Breast epithelium (tissue), 4 donors: ENCODE measurements at regions of chr7 and their contacts with region 1.

Region 1: DNA sequence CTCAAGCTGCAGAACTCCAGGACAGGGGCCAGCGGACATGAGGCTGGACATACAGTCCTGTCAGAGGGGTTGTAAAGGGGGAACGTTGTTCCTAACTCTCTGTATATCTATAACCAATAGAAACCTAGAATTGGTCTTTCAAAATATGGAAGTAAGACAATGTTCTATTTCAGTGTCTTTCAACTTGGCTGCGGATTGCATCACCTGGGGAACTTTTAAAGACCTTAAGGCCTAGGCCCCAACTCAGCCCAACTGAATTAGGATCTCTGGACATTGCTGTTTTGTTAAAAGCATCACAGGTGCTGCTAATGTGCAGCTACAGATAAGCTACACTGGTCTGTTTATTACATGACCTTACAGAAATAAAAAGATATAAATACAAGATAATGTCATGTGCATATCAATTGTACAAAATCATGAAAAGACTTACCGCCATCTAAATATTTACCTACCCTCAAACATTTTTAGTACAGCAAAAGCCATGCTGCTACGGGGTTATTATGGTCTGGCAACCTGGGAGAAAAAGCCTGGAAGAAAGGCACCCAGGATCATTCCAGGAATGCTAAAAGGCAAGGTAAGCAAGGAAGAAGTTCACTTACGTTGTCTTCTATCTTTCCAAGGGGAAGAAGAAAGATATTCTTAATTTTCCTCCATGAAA is 169.1 kb downstream of the RAPGEF5 start:
- DNase-seq: no peak
- H3K4me3 ChIP-seq: no peak overlapping the region
- H3K27ac ChIP-seq: no peak overlapping the region
- H3K4me1 ChIP-seq: no peaks in the 10 kb centered on the region
- H3K27me3 ChIP-seq: no peaks in the 10 kb centered on the region
- CTCF ChIP-seq: no peak
- POLR2A ChIP-seq: no peak

Region 2: DNA sequence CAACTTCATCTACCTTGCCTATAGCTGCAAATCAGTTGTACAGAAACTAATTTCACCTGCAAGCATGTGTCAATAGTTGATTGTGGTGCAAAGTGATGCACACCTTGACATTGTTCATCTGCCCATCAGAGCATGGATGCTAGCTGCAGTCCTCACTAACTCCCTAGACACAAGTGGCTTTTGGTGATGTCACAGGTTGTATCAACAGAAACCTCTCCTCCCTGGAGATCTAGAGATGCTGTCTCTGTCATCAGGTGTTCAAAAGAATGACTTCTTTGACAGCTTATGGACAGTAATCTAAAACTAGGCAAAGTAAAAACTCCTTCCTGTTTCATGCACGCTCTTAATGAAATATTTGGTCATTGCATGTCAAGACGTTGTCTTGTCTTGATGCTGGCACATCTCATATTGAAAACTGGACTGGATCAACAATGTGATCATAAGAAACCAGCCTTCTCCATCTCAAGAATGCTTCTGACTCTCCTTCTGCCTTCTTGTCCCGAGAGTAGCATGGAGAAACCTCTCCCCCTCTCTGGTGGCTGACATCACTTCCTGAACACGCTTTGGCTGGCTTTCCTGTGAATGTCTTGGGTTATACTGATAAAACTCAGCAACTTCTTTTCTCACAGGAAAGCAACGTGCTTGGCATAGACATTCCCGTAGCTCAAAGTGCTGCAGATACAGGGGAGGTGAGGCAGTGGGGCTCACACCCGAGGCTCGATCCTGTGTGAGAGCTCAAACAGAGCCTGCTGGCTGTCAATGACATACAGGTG is 65.9 kb before region 1 on chr7:
- intact Hi-C with region 1: no loop called
- DNase-seq: no peak
- H3K4me3 ChIP-seq: no peak overlapping the region
- H3K27ac ChIP-seq: no peak overlapping the region
- H3K4me1 ChIP-seq: no peaks in the 10 kb centered on the region
- H3K27me3 ChIP-seq: no peaks in the 10 kb centered on the region
- CTCF ChIP-seq: no peak
- POLR2A ChIP-seq: no peak

Region 3: DNA sequence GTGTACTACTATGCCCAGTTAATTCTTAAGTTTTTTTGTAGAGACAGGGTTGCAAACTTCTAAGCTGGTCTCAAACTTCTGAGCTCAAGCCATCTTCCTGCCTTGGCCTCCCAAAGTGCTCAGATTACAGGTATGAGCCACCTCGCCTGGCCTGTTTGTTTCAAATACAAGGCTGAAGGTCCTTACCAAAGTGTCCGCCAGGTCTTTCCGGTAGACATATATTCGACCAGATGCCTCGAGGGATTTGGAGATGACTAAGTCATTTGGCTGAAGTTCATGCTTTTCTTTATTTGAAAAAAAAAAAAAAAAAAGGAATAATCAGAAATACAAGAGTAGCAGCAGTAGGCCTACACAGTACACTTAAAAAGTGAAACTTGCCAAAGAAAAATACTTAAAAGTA is 37.6 kb before region 1 on chr7:
- intact Hi-C with region 1: loop called (anchors 2 kb)
- DNase-seq: no peak
- H3K4me3 ChIP-seq: no peak overlapping the region
- H3K27ac ChIP-seq: no peak overlapping the region
- H3K4me1 ChIP-seq: no peaks in the 10 kb centered on the region
- H3K27me3 ChIP-seq: no peaks in the 10 kb centered on the region
- CTCF ChIP-seq: no peak
- POLR2A ChIP-seq: no peak